WTC11 (cell line): ENCODE measurements at regions of chr20 and their contacts with region 1.

Region 1: DNA sequence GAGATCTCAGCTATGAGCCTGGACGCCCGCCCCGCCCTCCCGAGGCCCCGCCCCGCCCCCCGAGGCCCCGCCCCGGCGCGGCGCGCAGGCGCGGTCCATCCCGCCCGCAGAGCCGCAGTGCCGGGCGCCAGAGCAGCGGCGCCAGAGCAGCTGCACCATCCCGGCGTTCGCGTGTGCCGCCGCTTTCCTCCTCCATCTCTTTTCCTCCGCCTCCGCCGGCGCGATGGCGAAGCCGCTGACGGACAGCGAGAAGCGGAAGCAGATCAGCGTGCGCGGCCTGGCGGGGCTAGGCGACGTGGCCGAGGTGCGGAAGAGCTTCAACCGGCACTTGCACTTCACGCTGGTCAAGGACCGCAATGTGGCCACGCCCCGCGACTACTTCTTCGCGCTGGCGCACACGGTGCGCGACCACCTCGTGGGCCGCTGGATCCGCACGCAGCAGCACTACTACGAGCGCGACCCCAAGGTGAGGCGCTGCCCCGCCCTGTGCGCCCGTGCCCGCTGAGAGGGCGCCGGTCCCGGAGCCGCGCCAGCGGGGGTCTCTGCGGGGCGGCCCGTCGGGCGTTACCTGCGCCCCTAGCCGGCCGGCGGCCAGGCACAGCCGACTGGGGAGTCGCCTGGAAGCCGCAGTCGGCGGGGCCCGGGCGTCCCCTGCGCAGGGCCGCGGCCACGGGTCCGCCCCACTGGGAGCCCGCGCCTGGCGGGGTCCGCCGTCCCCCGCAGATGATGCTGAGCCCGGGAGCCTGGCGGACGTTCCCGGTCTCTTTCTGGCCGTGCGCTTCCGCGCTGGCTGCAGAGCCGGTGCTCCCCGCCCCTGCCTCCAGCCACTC is at the start of gene PYGB:
- DNase-seq: peak; percentile 82
- ATAC-seq: peak; percentile 73
- H3K4me3 Mint-ChIP-seq: peak within 1 kb of the TSS; percentile 88
- H3K27ac Mint-ChIP-seq: peak within 1 kb of the TSS; percentile 94
- H3K4me1 Mint-ChIP-seq: peaks cover 39% of the 10 kb centered on the region
- H3K27me3 Mint-ChIP-seq: peaks cover 9% of the 10 kb centered on the region
- CTCF ChIP-seq: no peak
- total RNA-seq, gene PYGB: 44.5 to 48.5 TPM (median 46.3 TPM) in 3 replicates

Region 2: GRCh38 chr20:24981790-24982189 is 266.4 kb before region 1 on chr20:
- CTCF ChIA-PET with region 1: no interaction called
- POLR2A ChIA-PET with region 1: no interaction called
- DNase-seq: no peak
- ATAC-seq: no peak
- H3K4me3 Mint-ChIP-seq: no peak overlapping the region
- H3K27ac Mint-ChIP-seq: no peak overlapping the region
- H3K4me1 Mint-ChIP-seq: no peaks in the 10 kb centered on the region
- H3K27me3 Mint-ChIP-seq: no peaks in the 10 kb centered on the region
- CTCF ChIP-seq: no peak

Region 3: GRCh38 chr20:25042531-25043498 is 205.4 kb before region 1 on chr20:
- CTCF ChIA-PET with region 1: no interaction called
- POLR2A ChIA-PET with region 1: no interaction called
- DNase-seq: no peak
- ATAC-seq: peak; percentile 66
- H3K4me3 Mint-ChIP-seq: no peak overlapping the region
- H3K27ac Mint-ChIP-seq: no peak overlapping the region
- H3K4me1 Mint-ChIP-seq: no peaks in the 10 kb centered on the region
- H3K27me3 Mint-ChIP-seq: no peaks in the 10 kb centered on the region; the same call in 1 of the 2 replicates
- CTCF ChIP-seq: no peak

Region 4: GRCh38 chr20:25076731-25077609 is 171.2 kb before region 1 on chr20:
- CTCF ChIA-PET with region 1: interaction called, 11 read pairs
- POLR2A ChIA-PET with region 1: no interaction called
- DNase-seq: no peak
- ATAC-seq: peak; percentile 13; the same call in 1 of the 2 replicates
- H3K4me3 Mint-ChIP-seq: peak overlapping the region; percentile 64
- H3K27ac Mint-ChIP-seq: no peak overlapping the region
- H3K4me1 Mint-ChIP-seq: peaks cover 13% of the 10 kb centered on the region
- H3K27me3 Mint-ChIP-seq: peaks cover 51% of the 10 kb centered on the region
- CTCF ChIP-seq: no peak

Region 5: DNA sequence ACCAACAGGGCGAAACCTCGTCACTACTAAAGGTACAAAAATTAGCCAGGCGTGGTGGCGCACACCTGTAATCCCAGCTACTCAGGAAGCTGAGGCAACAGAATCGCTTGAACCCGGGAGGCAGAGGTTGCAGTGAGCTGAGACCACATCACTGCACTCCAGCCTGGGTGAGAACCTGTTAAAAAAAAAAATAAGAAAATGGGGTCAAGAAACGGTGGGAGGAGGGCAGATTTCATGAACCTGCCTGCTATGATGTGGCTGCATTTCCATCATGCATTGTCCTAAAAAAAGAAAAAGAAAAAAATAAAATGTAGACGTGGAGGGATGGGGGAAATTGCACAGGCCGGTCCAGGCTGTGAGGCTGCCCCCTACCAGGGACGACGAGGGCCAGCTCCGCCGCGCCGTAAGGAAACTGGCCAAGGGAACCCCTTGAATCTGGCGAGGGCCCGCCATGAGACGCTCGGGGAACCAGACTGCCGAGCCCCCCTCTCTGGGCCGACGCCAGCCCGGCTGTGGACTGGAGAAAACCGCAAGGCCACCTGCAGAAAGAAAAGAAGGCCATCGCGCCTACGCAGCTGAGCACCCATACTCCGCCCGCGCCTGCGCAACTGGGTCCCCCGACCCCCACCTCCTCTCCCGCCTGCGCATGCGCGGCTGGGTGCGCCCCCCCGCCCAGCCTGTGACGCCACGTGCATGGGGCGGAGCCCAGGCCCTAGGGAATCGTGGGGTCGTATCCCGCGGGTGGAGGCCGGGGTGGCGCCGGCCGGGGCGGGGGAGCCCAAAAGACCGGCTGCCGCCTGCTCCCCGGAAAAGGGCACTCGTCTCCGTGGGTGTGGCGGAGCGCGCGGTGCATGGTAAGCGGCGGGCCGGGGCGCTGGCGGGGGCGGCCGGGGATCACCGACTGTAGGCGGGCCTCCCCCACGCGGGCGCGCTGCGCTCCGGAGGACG is 52.9 kb before region 1 on chr20 and contains the start of gene ENTPD6:
- CTCF ChIA-PET with region 1: interaction called, 22 read pairs
- POLR2A ChIA-PET with region 1: interaction called, 5 read pairs
- DNase-seq: peak; percentile 81
- ATAC-seq: peak; percentile 71
- H3K4me3 Mint-ChIP-seq: peak within 1 kb of the TSS; percentile 96
- H3K27ac Mint-ChIP-seq: peak within 1 kb of the TSS; percentile 77; the same call in 1 of the 2 replicates
- H3K4me1 Mint-ChIP-seq: peaks cover 32% of the 10 kb centered on the region
- H3K27me3 Mint-ChIP-seq: no peaks in the 10 kb centered on the region; the same call in 1 of the 2 replicates
- CTCF ChIP-seq: no peak
- total RNA-seq, gene ENTPD6: 41.1 to 56.9 TPM (median 47.4 TPM) in 3 replicates

Region 6: GRCh38 chr20:25223179-25223661 is 25.0 kb before region 1 on chr20:
- CTCF ChIA-PET with region 1: interaction called, 48 read pairs
- POLR2A ChIA-PET with region 1: interaction called, 3 read pairs
- DNase-seq: no peak
- ATAC-seq: peak; percentile 78
- H3K4me3 Mint-ChIP-seq: no peak overlapping the region
- H3K27ac Mint-ChIP-seq: peak overlapping the region; percentile 63
- H3K4me1 Mint-ChIP-seq: peaks cover 3% of the 10 kb centered on the region; the same call in 1 of the 2 replicates
- H3K27me3 Mint-ChIP-seq: no peaks in the 10 kb centered on the region
- CTCF ChIP-seq: no peak

Region 7: GRCh38 chr20:25236450-25237304 is 11.5 kb before region 1 on chr20:
- CTCF ChIA-PET with region 1: interaction called, 16 read pairs
- POLR2A ChIA-PET with region 1: no interaction called
- DNase-seq: no peak
- ATAC-seq: peak; percentile 51
- H3K4me3 Mint-ChIP-seq: no peak overlapping the region
- H3K27ac Mint-ChIP-seq: no peak overlapping the region
- H3K4me1 Mint-ChIP-seq: peaks cover 10% of the 10 kb centered on the region
- H3K27me3 Mint-ChIP-seq: no peaks in the 10 kb centered on the region; the same call in 1 of the 2 replicates
- CTCF ChIP-seq: no peak